ENCODE measurements at regions of chr9 and their contacts with region 1.

Region 1: DNA sequence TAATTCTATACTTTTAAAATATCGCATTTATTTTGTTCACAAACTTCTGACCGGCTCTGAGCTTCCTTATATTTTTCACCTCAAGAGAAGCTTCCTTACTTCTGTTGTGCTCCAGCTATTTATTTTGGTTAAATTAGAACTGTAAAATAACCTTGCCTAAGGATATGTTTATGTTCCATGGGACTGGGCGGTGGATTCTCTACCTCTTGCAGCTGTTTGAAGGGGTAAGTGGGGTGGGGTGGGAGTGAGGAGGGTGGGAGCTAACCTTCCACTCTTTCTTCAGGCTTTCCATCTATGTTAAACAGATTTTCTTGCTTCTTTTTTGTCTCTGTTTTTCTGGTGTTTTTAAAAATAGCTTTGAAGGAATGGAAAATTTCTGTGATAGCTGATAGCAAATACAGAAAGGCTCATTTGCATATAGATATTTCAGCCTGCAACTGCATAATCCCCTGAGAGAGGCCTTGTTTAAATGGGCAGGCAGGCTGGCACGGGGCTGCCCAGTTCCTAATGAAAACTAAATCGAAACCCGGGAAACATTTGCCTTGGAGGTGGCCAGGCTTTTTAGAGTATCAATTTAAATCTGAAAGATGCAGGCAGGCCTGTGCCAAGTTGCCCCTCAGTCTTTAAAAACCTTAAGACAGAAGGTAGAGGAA is 122.1 kb upstream of the DMAC1 start:
- DNase-seq: no peak
- ATAC-seq: no peak
- H3K4me3 ChIP-seq: no peak overlapping the region
- H3K4me3 Mint-ChIP-seq: no peak overlapping the region
- H3K27ac ChIP-seq: no peak overlapping the region
- H3K27ac Mint-ChIP-seq: no peak overlapping the region
- H3K4me1 ChIP-seq: no peaks in the 10 kb centered on the region
- H3K4me1 Mint-ChIP-seq: no peaks in the 10 kb centered on the region
- H3K27me3 ChIP-seq: no peaks in the 10 kb centered on the region
- H3K27me3 Mint-ChIP-seq: no peaks in the 10 kb centered on the region
- CTCF ChIP-seq: no peak

Region 2: GRCh38 chr9:8020186-8020585 is 98.5 kb after region 1 on chr9:
- CTCF ChIA-PET with region 1: no interaction called
- POLR2A ChIA-PET with region 1: no interaction called
- intact Hi-C with region 1: loop called in 1 of 2 experiments (anchors 5 kb)
- DNase-seq: no peak
- ATAC-seq: no peak
- H3K4me3 ChIP-seq: no peak overlapping the region
- H3K4me3 Mint-ChIP-seq: no peak overlapping the region
- H3K27ac ChIP-seq: no peak overlapping the region
- H3K27ac Mint-ChIP-seq: no peak overlapping the region
- H3K4me1 ChIP-seq: no peaks in the 10 kb centered on the region
- H3K4me1 Mint-ChIP-seq: no peaks in the 10 kb centered on the region
- H3K27me3 ChIP-seq: no peaks in the 10 kb centered on the region
- H3K27me3 Mint-ChIP-seq: no peaks in the 10 kb centered on the region
- CTCF ChIP-seq: no peak

Measured in CD4-positive, alpha-beta T cell (primary cell).